ENCODE measurements at regions of chr4 and their contacts with region 1.

Region 1: DNA sequence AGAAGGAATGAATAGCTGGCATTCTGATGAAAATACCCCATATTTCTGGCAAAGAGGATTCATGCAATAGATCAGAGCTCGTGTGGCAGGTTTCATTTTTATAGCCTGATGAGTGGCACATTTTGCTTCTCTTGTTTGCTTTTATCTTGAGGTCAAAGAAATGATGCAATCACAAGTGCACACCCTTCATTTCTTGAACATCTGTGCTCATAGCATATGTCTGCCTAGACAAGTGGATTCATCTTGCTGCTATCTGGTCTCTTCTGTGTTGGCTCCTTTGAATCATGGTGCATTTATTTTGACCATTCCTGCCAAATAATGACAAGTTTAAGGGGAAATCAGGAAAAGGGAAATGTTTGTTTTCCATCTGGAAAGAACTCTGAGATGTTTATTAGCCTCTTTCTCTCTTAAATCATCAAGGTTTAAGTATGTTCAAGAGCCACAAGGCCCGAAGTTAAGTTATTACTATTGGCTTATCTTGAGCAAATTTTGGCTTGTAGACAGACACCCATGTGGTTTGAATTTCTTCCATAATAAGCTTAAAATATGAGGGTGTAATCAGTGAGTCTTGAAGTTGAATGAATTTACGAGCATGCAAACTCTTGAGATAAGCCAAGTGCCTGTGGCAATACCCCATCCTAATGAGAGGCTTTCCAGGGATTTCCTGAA is 59.3 kb upstream of the HS3ST1 start:
- DNase-seq: no peak
- ATAC-seq: peak; percentile 12
- H3K4me3 ChIP-seq: no peak overlapping the region
- H3K4me3 Mint-ChIP-seq: no peak overlapping the region
- H3K27ac ChIP-seq: no peak overlapping the region
- H3K27ac Mint-ChIP-seq: peak overlapping the region; percentile 80
- H3K4me1 ChIP-seq: peaks cover 2% of the 10 kb centered on the region
- H3K4me1 Mint-ChIP-seq: peaks cover 30% of the 10 kb centered on the region
- H3K27me3 ChIP-seq: no peaks in the 10 kb centered on the region
- H3K27me3 Mint-ChIP-seq: no peaks in the 10 kb centered on the region
- CTCF ChIP-seq: no peak

Region 2: GRCh38 chr4:11455201-11455835 is 32.7 kb before region 1 on chr4:
- CTCF ChIA-PET with region 1: no interaction called
- POLR2A ChIA-PET with region 1: no interaction called
- intact Hi-C with region 1: no loop called
- DNase-seq: no peak
- ATAC-seq: no peak
- H3K4me3 ChIP-seq: no peak overlapping the region
- H3K4me3 Mint-ChIP-seq: no peak overlapping the region
- H3K27ac ChIP-seq: no peak overlapping the region
- H3K27ac Mint-ChIP-seq: no peak overlapping the region
- H3K4me1 ChIP-seq: no peaks in the 10 kb centered on the region
- H3K4me1 Mint-ChIP-seq: peaks cover 6% of the 10 kb centered on the region
- H3K27me3 ChIP-seq: no peaks in the 10 kb centered on the region
- H3K27me3 Mint-ChIP-seq: no peaks in the 10 kb centered on the region
- CTCF ChIP-seq: no peak

Region 3: GRCh38 chr4:11471618-11472017 is 16.4 kb before region 1 on chr4:
- CTCF ChIA-PET with region 1: no interaction called
- POLR2A ChIA-PET with region 1: interaction called, 12 read pairs
- intact Hi-C with region 1: loop called in 1 of 2 experiments (anchors 1 kb)
- DNase-seq: peak; percentile 3 to 91 (median 46)
- ATAC-seq: peak; percentile 96
- H3K4me3 ChIP-seq: peak overlapping the region; percentile 49
- H3K4me3 Mint-ChIP-seq: peak overlapping the region; percentile 83
- H3K27ac ChIP-seq: peak overlapping the region; percentile 59 to 69
- H3K27ac Mint-ChIP-seq: peak overlapping the region; percentile 92
- H3K4me1 ChIP-seq: peaks cover 26% of the 10 kb centered on the region
- H3K4me1 Mint-ChIP-seq: peaks cover 36% of the 10 kb centered on the region
- H3K27me3 ChIP-seq: no peaks in the 10 kb centered on the region
- H3K27me3 Mint-ChIP-seq: no peaks in the 10 kb centered on the region
- CTCF ChIP-seq: no peak